Activated naive CD4-positive, alpha-beta T cell treated with anti-CD3 and anti-CD28 coated beads, Interleukin-2, amount 10 ng/mL, durations not matched to agents 7 days and 5 days (primary cell): ENCODE measurements at regions of chr1 and their contacts with region 1.

Region 1: DNA sequence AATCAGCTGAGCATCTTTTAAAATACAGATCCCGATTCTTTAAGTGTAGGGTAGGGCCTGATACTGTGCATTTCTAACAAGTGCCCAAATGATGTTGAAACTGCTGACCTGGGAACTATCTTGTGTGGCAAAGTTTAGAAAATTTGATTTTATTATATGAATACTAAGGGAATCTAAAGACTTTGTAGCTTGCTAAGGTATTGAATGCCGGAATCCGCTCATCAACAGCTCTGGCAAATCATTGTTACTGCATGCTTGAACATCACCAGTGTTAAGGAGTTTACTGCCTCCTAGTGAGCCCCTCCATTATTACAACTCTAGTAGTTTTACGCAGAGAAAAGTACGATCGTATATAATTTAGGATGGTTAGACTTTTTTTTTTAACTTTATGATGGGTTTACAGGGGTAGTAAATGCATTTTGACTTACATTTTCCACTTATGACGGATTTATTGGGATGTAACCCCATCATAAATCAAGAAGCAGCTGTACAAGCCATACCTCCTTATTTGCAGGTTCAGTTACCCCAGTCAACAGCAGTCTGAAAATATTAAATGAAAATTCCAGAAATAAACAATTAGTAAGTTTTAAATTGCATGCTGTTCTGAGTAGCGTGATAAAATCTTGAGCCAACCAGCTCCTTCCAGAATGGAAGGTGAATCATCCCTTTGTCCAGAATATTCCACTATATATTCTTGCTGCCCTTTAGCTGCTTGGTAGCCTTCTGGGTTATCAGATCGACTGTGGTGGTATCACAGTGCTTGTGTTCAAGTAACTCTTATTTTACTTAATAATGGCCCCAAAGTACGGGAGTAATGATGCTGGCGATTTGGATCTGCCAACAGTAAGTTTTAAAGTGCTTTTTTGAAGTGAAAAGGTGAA is 892 bp downstream of the TYW3 start:
- DNase-seq: peak; percentile 48
- H3K4me3 Mint-ChIP-seq: peak overlapping the region; percentile 79
- H3K27ac Mint-ChIP-seq: peak overlapping the region; percentile 95
- H3K4me1 Mint-ChIP-seq: peaks cover 32% of the 10 kb centered on the region
- H3K27me3 Mint-ChIP-seq: no peaks in the 10 kb centered on the region

Region 2: DNA sequence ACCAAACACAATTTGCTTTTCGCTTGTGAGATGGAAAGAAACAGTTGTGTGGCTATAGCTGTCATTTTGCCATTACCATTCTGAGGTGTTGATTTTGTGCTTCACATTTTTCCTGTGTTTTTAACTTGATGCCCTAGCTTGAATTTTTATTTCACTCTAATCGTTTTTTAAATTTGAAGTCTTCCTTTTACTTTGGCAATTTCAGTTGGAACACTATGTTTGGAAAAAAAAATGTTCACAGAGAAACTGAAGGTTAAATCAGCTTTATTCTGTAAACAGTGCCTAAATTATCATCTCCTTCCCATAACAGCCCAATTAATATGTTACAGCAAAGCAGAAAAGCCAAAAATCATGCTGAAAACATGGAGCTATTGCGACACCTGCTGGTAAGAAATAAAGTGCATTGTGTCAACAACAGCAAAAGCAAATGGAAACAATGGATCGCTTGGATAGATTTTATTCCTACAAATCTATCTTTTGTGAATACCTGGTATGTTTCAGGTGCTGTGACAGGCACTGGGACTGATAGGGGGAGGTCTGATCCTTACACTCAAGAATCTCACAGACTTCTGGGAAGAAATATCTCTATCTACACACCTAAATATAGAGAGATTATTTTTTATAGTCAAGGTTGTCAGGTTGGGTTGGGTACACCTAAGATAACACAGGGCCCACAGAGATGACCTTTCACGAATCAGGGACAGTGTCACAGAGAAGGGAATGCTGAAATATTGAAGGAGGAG is 44.1 kb before region 1 on chr1:
- CTCF ChIA-PET with region 1: interaction called, 16 read pairs
- DNase-seq: peak; percentile 55
- H3K4me3 Mint-ChIP-seq: no peak overlapping the region
- H3K27ac Mint-ChIP-seq: no peak overlapping the region
- H3K4me1 Mint-ChIP-seq: no peaks in the 10 kb centered on the region
- H3K27me3 Mint-ChIP-seq: no peaks in the 10 kb centered on the region

Region 3: DNA sequence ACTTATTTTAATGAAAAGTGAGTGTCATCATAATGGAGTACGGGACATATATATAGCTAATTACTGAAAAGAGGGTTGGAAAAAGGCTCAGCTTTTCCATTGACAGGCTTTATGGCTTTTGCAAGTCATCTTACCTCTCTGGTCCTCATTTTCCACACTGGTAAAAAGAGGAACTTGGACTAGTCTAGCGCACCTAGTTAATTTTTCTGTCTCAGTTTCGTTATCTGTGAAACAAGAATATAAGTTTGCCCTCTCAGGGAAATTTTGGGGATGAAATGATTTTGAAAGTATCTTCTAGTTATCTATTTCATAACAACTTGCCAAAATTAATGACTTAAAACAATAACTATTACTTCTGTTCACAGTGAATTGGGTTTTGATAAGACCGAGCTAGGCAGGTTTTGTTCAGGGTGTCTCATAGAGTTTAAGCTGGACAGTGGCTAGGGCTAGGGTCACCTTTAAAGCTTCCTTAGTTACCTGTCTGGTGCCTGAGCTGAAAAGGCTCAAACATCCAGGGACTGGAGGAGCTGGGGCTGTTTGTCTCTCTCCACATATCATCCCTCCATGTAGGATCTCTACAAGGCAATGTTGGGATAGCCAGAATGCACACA is 90.8 kb after region 1 on chr1:
- CTCF ChIA-PET with region 1: no interaction called
- DNase-seq: no peak
- H3K4me3 Mint-ChIP-seq: no peak overlapping the region
- H3K27ac Mint-ChIP-seq: no peak overlapping the region
- H3K4me1 Mint-ChIP-seq: no peaks in the 10 kb centered on the region
- H3K27me3 Mint-ChIP-seq: no peaks in the 10 kb centered on the region